ENCODE measurements at regions of chr6 and their contacts with region 1.

Region 1: DNA sequence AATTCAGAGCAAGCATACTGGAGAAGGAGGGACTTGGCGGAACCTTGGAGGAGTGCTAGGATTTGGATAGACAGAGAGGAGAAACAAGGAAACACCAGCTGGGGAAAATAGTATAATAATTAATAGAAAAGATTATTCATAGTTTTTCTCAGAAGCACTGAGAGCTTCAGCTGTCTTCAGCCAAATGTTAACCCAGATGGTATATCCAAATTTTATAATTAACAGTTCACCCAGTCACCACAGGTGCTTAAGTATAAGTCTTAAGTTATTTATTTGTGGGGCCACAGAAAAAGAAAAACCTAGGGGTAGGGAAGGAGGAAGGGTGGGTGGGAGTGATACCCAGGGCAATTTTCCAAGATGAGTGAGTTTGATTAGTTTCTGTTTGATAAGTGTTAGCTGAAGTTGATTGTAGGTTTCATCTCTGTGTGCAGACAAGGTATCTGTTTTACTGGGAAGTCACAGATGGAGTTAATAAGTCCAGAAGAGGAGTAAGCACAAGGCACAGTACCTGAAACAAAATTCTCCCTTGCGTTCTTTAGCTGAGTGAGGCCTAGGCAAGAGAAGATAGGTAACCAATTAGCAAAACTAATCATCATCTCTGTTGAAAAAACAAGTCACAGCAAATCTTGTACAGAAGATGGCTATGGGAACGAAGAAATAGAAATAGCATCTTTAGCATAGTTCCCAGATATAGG is 175.5 kb downstream of the TFAP2B start:
- DNase-seq: no peak
- ATAC-seq: no peak
- H3K4me3 ChIP-seq: no peak overlapping the region
- H3K27ac ChIP-seq: no peak overlapping the region
- H3K4me1 ChIP-seq: peaks cover 0 to 18% of the 10 kb centered on the region in 2 experiments; a peak in 3 of 5 replicates
- H3K27me3 ChIP-seq: no peaks in the 10 kb centered on the region
- CTCF ChIP-seq: no peak
- EP300 ChIP-seq: no peak
- POLR2A ChIP-seq: no peak
- RAD21 ChIP-seq: no peak

Region 2: GRCh38 chr6:50913105-50913770 is 80.9 kb before region 1 on chr6:
- CTCF ChIA-PET with region 1: no interaction called
- POLR2A ChIA-PET with region 1: no interaction called
- in situ Hi-C with region 1: no loop called
- intact Hi-C with region 1: no loop called
- DNase-seq: no peak
- ATAC-seq: no peak
- H3K4me3 ChIP-seq: no peak overlapping the region
- H3K27ac ChIP-seq: no peak overlapping the region
- H3K4me1 ChIP-seq: peaks cover 0 to 3% of the 10 kb centered on the region in 2 experiments; a peak in 1 of 5 replicates
- H3K27me3 ChIP-seq: no peaks in the 10 kb centered on the region
- CTCF ChIP-seq: no peak
- EP300 ChIP-seq: no peak
- POLR2A ChIP-seq: no peak
- RAD21 ChIP-seq: no peak

Region 3: GRCh38 chr6:51004380-51004779 is 10.2 kb after region 1 on chr6:
- CTCF ChIA-PET with region 1: no interaction called
- POLR2A ChIA-PET with region 1: interaction called, 12 read pairs
- in situ Hi-C with region 1: no loop called
- intact Hi-C with region 1: no loop called
- DNase-seq: no peak
- ATAC-seq: peak; percentile 58; the same call in 1 of the 3 replicates
- H3K4me3 ChIP-seq: no peak overlapping the region
- H3K27ac ChIP-seq: no peak overlapping the region
- H3K4me1 ChIP-seq: peaks cover 0 to 9% of the 10 kb centered on the region in 2 experiments; a peak in 2 of 5 replicates
- H3K27me3 ChIP-seq: no peaks in the 10 kb centered on the region
- CTCF ChIP-seq: no peak
- EP300 ChIP-seq: no peak
- POLR2A ChIP-seq: no peak
- RAD21 ChIP-seq: no peak